ENCODE measurements at regions of chr6 and their contacts with region 1.

Region 1: GRCh38 chr6:159463119-159463829 is 229.8 kb downstream of the SOD2 start:
- DNase-seq: no peak
- ATAC-seq: peak; percentile 45

Region 2: DNA sequence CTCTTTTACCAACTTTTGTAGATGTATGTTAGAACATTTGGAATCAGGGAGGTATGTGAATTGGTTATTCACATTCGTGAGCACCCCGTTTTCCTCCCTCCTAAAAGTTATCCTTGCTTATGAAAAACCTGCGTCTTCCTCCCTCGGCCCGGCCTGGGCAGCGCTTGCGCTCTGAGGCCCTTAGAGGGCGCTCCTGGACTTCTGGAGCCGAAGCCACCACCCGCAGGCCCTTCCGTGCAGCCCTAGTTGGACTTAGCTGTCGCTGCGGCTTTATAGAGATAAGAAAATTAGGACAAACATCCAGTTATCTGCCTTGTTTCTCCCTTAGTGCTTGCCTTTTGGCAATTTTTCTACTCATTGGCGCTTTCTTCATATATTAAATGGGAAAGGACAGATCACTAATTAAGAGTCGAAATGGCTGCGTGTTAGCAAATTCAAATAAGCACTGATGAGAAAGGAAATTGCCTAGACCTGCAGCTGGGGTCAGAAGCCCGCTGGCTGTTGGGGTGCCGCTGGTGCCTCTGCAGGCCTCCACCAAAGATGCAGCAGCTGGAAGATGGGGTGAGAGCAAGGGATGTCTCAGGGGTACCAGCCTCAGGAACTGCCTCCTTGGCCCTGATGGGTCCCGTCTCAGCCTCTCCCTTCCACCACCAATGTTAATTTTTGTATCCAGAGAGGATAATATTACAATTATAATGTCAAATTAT is 288.9 kb before region 1 on chr6:
- intact Hi-C with region 1: loop called (anchors 10 kb)
- DNase-seq: peak; percentile 81
- ATAC-seq: peak; percentile 88

Region 3: GRCh38 chr6:160042788-160043301 is 579.6 kb after region 1 on chr6:
- intact Hi-C with region 1: no loop called
- DNase-seq: no peak
- ATAC-seq: peak; percentile 64

Measured in sciatic nerve (tissue), 2 donors.